GM12878 (cell line): ENCODE measurements at regions of chr20 and their contacts with region 1.

Region 1: GRCh38 chr20:11204926-11205768 is 531.3 kb upstream of the JAG1 start:
- DNase-seq: peak; percentile 50
- ATAC-seq: peak; percentile 99
- H3K4me3 ChIP-seq: no peak overlapping the region
- H3K27ac ChIP-seq: no peak overlapping the region
- H3K4me1 ChIP-seq: no peaks in the 10 kb centered on the region
- H3K27me3 ChIP-seq: no peaks in the 10 kb centered on the region; a peak in 1 of 4 replicates
- CTCF ChIP-seq: peak; percentile 80 to 89 (median 84)
- EP300 ChIP-seq: no peak
- POLR2A ChIP-seq: no peak
- RAD21 ChIP-seq: peak; percentile 81

Region 2: DNA sequence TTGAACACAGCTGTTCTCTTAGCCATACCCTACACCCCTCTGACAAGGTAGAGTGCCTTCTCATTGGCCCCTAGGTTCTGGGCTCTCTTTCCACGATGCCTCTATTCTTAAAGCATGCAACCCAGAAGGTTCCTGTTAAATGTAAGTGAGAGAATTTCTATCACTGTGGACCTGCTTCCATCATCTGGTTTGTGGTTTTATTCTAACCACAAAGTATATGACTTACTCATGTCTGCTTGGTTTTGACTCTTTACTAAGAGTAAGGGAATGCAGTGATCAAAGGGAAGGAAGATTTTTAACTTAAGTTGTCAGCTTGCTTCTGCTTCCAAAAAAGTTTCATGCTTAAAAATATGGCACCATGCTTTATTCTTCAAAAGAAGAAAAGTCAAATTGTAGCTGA is 1090.1 kb before region 1 on chr20:
- CTCF ChIA-PET with region 1: no interaction called
- POLR2A ChIA-PET with region 1: no interaction called
- RAD21 ChIA-PET with region 1: no interaction called
- SMC1A ChIA-PET with region 1: no interaction called
- in situ Hi-C with region 1: no loop called
- intact Hi-C with region 1: no loop called
- DNase-seq: no peak
- ATAC-seq: no peak
- H3K4me3 ChIP-seq: no peak overlapping the region
- H3K27ac ChIP-seq: no peak overlapping the region
- H3K4me1 ChIP-seq: no peaks in the 10 kb centered on the region
- H3K27me3 ChIP-seq: no peaks in the 10 kb centered on the region; a peak in 1 of 4 replicates
- CTCF ChIP-seq: no peak
- EP300 ChIP-seq: no peak
- POLR2A ChIP-seq: no peak
- RAD21 ChIP-seq: no peak

Region 3: GRCh38 chr20:10558635-10559187 is 646.4 kb before region 1 on chr20:
- CTCF ChIA-PET with region 1: interaction called, 5 read pairs
- POLR2A ChIA-PET with region 1: interaction called, 3 read pairs
- RAD21 ChIA-PET with region 1: no interaction called
- SMC1A ChIA-PET with region 1: interaction called, 10 read pairs
- in situ Hi-C with region 1: loop called (anchors 10 kb)
- intact Hi-C with region 1: loop called (anchors 2 kb)
- DNase-seq: peak; percentile 84
- ATAC-seq: peak; percentile 98
- H3K4me3 ChIP-seq: no peak overlapping the region
- H3K27ac ChIP-seq: peak overlapping the region; percentile 59
- H3K4me1 ChIP-seq: peaks cover 11% of the 10 kb centered on the region; the same call in 1 of the 2 replicates
- H3K27me3 ChIP-seq: no peaks in the 10 kb centered on the region
- CTCF ChIP-seq: no peak
- EP300 ChIP-seq: peak; percentile 95 to 96; a peak in 3 of 4 replicates
- POLR2A ChIP-seq: no peak
- RAD21 ChIP-seq: no peak

Region 4: DNA sequence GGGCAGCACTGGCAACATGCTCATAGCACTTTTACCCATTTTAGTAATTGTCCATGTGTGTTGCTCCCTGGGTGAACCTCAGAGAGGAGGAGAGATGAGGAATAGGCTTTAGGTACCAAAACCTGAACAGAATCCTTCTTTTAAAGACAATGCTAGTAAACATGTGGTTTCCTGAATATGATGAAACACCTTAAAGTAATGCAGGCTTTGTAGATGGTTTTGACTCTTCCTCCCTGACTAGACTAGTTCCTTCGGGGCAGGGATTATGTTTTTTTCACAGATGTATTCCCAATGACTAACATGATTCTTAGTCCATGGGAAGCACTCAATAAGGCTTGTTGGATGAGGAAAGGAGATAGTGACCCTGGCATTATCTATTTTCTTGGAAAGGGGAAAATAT is 163.8 kb before region 1 on chr20:
- CTCF ChIA-PET with region 1: no interaction called
- POLR2A ChIA-PET with region 1: no interaction called
- RAD21 ChIA-PET with region 1: no interaction called
- SMC1A ChIA-PET with region 1: no interaction called
- in situ Hi-C with region 1: no loop called
- intact Hi-C with region 1: no loop called
- DNase-seq: no peak
- ATAC-seq: no peak
- H3K4me3 ChIP-seq: no peak overlapping the region
- H3K27ac ChIP-seq: no peak overlapping the region
- H3K4me1 ChIP-seq: no peaks in the 10 kb centered on the region
- H3K27me3 ChIP-seq: no peaks in the 10 kb centered on the region
- CTCF ChIP-seq: no peak
- EP300 ChIP-seq: no peak
- POLR2A ChIP-seq: no peak
- RAD21 ChIP-seq: no peak

Region 5: GRCh38 chr20:11188843-11189603 is 16.1 kb before region 1 on chr20:
- CTCF ChIA-PET with region 1: interaction called, 15 read pairs
- POLR2A ChIA-PET with region 1: no interaction called
- RAD21 ChIA-PET with region 1: interaction called, 4 read pairs
- SMC1A ChIA-PET with region 1: interaction called, 5 read pairs
- in situ Hi-C with region 1: no loop called
- intact Hi-C with region 1: no loop called
- DNase-seq: no peak
- ATAC-seq: no peak
- H3K4me3 ChIP-seq: no peak overlapping the region
- H3K27ac ChIP-seq: no peak overlapping the region
- H3K4me1 ChIP-seq: no peaks in the 10 kb centered on the region
- H3K27me3 ChIP-seq: no peaks in the 10 kb centered on the region
- CTCF ChIP-seq: no peak
- EP300 ChIP-seq: no peak
- POLR2A ChIP-seq: no peak
- RAD21 ChIP-seq: no peak

Region 6: DNA sequence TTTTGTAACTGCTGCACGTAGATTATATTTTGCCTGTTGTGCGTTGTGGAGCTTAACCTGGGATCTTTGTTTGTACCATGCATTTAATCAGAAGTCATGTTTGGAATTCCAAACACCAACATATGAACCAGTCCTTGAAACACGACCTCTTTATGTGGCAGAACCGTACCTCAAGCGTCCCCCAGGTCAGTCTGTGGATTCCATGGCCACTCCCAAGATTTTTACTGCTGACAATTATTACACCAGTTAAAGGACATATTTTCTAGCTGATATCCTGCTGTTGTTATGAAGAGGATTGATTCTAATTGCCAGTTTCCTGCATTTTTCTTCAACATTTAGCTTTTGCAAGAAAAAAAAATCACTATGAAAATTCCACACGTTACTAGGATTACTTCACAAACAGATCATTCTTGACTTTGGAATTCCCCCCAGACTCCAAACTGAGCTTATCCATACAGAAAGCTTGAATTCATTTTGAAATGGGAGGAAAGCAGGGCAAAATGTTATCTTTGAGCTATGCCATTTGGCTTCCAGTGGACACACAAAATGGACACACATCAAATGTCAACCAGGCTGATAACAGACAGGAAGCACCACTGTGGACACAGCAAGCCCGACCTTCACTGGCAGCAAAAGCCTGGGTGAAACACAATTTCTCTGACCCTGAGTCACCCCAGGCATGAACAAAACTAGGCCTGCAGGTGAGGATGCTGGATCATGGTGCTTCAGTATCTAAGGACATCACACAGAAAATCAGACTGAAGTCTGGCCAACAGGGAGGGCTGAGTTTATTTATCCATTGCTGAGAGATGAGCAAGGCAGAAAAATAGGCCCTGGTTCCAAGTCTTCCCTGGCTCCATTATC is 11.5 kb after region 1 on chr20:
- CTCF ChIA-PET with region 1: interaction called, 64 read pairs
- POLR2A ChIA-PET with region 1: interaction called, 4 read pairs
- RAD21 ChIA-PET with region 1: interaction called, 19 read pairs
- SMC1A ChIA-PET with region 1: interaction called, 87 read pairs
- in situ Hi-C with region 1: no loop called
- intact Hi-C with region 1: no loop called
- DNase-seq: no peak
- ATAC-seq: no peak; the same call in 2 of the 3 replicates
- H3K4me3 ChIP-seq: no peak overlapping the region
- H3K27ac ChIP-seq: no peak overlapping the region
- H3K4me1 ChIP-seq: peaks cover 13% of the 10 kb centered on the region
- H3K27me3 ChIP-seq: no peaks in the 10 kb centered on the region
- CTCF ChIP-seq: no peak
- EP300 ChIP-seq: no peak
- POLR2A ChIP-seq: no peak
- RAD21 ChIP-seq: no peak

Region 7: DNA sequence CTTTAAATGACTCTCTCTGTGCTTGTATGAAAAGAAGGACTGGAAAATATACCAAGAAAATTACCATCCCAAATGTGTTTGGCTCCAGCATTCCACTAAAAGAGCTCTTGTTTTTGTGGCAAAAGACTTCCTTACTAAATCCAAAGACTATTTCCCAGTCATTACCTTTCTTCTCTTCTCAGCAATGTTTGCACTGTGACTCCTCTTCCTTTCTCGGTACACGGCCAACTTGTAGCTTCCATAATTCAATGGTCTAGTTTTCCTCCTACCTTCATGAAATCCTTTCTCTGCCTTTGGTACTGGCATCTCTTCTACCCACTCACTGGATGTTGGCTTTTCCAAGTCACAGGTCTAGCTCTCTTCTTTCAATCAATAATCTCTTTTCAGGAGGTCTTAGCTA is 37.2 kb after region 1 on chr20:
- CTCF ChIA-PET with region 1: interaction called, 5 read pairs
- POLR2A ChIA-PET with region 1: no interaction called
- RAD21 ChIA-PET with region 1: interaction called, 6 read pairs
- SMC1A ChIA-PET with region 1: interaction called, 21 read pairs
- in situ Hi-C with region 1: no loop called
- intact Hi-C with region 1: no loop called
- DNase-seq: no peak
- ATAC-seq: no peak
- H3K4me3 ChIP-seq: no peak overlapping the region
- H3K27ac ChIP-seq: no peak overlapping the region
- H3K4me1 ChIP-seq: no peaks in the 10 kb centered on the region
- H3K27me3 ChIP-seq: no peaks in the 10 kb centered on the region; a peak in 2 of 4 replicates
- CTCF ChIP-seq: no peak
- EP300 ChIP-seq: no peak
- POLR2A ChIP-seq: no peak
- RAD21 ChIP-seq: no peak

Region 8: GRCh38 chr20:11261533-11262000 is 56.4 kb after region 1 on chr20:
- CTCF ChIA-PET with region 1: interaction called, 21 read pairs
- POLR2A ChIA-PET with region 1: no interaction called
- RAD21 ChIA-PET with region 1: interaction called, 29 read pairs
- SMC1A ChIA-PET with region 1: interaction called, 51 read pairs
- in situ Hi-C with region 1: no loop called
- intact Hi-C with region 1: loop called (anchors 2 kb)
- DNase-seq: peak; percentile 38
- ATAC-seq: peak; percentile 96
- H3K4me3 ChIP-seq: no peak overlapping the region
- H3K27ac ChIP-seq: no peak overlapping the region
- H3K4me1 ChIP-seq: peaks cover under 1% of the 10 kb centered on the region; the same call in 1 of the 2 replicates
- H3K27me3 ChIP-seq: no peaks in the 10 kb centered on the region
- CTCF ChIP-seq: no peak
- EP300 ChIP-seq: 0 out of 4 replicates have a peak, but pooled peaks of 1 of the 2 experiments have one; percentile 11
- POLR2A ChIP-seq: no peak
- RAD21 ChIP-seq: no peak

Region 9: GRCh38 chr20:11274141-11274594 is 69.0 kb after region 1 on chr20:
- CTCF ChIA-PET with region 1: interaction called, 16 read pairs
- POLR2A ChIA-PET with region 1: no interaction called
- RAD21 ChIA-PET with region 1: interaction called, 4 read pairs
- SMC1A ChIA-PET with region 1: interaction called, 11 read pairs
- in situ Hi-C with region 1: no loop called
- intact Hi-C with region 1: no loop called
- DNase-seq: no peak
- ATAC-seq: peak; percentile 94
- H3K4me3 ChIP-seq: no peak overlapping the region
- H3K27ac ChIP-seq: no peak overlapping the region
- H3K4me1 ChIP-seq: no peaks in the 10 kb centered on the region; the same call in 1 of the 2 replicates
- H3K27me3 ChIP-seq: no peaks in the 10 kb centered on the region
- CTCF ChIP-seq: peak; percentile 51 to 84 (median 54); a peak in 5 of 6 replicates
- EP300 ChIP-seq: no peak
- POLR2A ChIP-seq: no peak
- RAD21 ChIP-seq: peak; percentile 94